Mammary epithelial cell (primary cell): ENCODE measurements at regions of chr2 and their contacts with region 1.

Region 1: GRCh38 chr2:113069645-113070402 is 2.1 kb downstream of the IL1F10 start:
- DNase-seq: no peak
- H3K4me3 ChIP-seq: no peak overlapping the region
- H3K27ac ChIP-seq: peak overlapping the region; percentile 51
- H3K4me1 ChIP-seq: peaks cover 60% of the 10 kb centered on the region
- H3K27me3 ChIP-seq: no peaks in the 10 kb centered on the region
- CTCF ChIP-seq: no peak

Region 2: DNA sequence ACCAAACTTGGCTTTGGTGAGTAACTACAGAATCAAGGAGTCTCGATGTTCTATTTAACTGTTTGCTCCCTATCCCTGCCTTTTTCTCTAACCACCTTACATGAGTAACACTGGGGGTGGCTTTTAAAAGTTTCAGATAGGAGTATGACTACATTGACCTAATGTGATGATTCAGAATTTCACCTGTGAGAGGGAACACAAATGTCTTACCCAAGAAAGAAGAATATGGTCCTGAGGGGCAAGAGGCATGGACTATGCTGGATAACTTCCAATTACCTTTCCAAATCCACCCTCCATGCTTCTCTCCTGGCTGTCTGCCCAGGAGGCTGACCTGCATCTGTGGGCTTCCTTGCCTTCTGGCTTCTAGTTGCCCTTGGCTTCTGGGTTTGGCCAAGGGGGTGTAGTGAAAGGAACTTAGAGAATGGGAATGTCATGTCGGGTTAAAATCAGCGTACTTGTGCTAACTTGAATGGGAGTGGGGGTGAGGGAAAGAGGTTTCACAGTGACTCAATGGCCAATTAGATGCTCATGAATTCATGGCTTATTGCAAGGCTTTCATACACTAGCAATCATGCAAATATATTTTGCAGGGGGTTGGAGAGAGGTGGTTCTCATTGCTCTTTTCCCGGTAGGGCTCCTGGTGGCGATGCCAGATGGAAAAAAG is 97.3 kb before region 1 on chr2:
- CTCF ChIA-PET with region 1: no interaction called
- dilution Hi-C with region 1: loop called (anchors 5 kb)
- in situ Hi-C with region 1: no loop called
- intact Hi-C with region 1: loop called (anchors 5 kb)
- DNase-seq: peak; percentile 97
- H3K4me3 ChIP-seq: no peak overlapping the region
- H3K27ac ChIP-seq: peak overlapping the region; percentile 76
- H3K4me1 ChIP-seq: peaks cover 31% of the 10 kb centered on the region
- H3K27me3 ChIP-seq: no peaks in the 10 kb centered on the region
- CTCF ChIP-seq: no peak

Region 3: DNA sequence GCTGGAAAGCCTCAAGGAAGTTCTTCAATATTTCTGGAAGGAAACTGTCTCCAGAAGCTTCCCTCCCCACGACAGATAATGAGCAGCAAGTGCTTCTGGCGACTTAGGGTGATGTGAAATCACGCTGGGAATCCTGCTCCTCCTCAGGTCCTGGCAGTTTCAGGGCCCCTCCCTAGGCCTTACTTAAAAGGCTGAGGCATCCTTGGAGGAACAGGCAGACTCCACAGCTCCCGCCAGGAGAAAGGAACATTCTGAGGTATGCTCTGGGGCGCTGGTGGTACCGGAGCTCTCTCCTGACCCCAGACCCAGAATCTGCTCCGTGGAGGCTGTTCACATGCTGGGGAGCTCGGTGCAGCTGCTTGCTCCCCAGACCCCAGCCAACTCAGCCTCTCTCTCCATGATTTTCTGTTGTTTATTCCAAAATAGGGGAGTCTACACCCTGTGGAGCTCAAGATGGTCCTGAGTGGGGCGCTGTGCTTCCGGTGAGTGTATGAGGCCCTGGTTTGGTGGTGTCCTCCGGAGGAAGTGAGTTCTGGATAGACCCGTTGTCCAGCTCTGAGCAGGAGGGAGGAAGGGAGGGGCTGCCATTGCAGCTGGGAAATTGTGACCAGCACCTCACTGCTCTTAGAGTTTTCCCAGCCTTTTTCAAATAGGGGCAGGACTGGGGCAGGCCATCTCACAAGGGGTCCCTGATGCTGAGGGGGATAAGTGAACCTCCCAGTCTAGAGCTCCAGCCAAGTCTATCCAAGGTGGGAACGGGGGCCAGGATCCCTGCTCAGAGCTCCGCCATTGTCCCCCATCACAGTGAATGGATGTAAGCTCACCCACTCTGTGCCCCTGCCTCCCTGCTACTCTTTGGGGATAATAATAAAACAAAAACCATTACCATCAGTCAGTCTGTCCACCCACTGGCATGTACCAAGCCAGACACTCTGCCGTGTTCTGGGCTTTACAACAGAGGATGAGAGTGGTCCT is 10.6 kb before region 1 on chr2 and contains the start of gene IL36RN:
- CTCF ChIA-PET with region 1: interaction called, 3 read pairs
- dilution Hi-C with region 1: no loop called
- in situ Hi-C with region 1: no loop called
- intact Hi-C with region 1: loop called (anchors 2 kb)
- DNase-seq: no peak
- H3K4me3 ChIP-seq: no peak within 1 kb of the TSS
- H3K27ac ChIP-seq: no peak within 1 kb of the TSS
- H3K4me1 ChIP-seq: peaks cover 10% of the 10 kb centered on the region
- H3K27me3 ChIP-seq: no peaks in the 10 kb centered on the region
- CTCF ChIP-seq: no peak
- total RNA-seq, gene IL36RN: 0.67 to 1.3 TPM